HepG2 (cell line): ENCODE measurements at regions of chr4 and their contacts with region 1.

Region 1: DNA sequence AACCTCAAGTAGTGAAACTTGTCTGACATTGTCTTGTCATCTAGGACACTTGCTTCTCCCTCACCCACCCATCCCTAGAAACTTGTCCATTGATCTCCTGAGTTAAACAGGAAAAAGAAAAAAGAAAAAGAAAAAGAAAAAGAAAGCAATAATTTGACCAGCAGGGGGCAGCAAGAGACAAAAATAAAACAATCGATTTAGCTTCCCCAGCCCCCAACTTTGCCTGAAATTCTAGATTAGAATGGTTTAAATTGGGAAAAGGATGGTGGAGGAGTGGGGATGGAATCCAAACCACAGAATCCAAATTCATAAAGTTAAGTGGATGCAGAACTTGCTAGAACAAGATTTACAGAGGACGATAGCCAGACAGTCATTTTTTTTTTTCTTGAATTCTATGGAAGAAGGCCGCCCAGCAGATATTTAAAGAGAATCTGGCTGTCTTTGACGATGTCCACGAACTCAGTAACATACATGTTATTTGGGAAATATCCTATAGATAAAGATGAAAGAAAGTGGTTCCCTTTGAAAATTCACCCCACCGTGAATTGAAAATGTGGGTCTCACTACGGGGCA is 282.9 kb downstream of the USP46 start:
- DNase-seq: peak; percentile 45
- ATAC-seq: no peak; the same call in 2 of the 3 replicates
- H3K4me3 ChIP-seq: no peak overlapping the region
- H3K27ac ChIP-seq: no peak overlapping the region
- H3K4me1 ChIP-seq: peaks cover 16% of the 10 kb centered on the region
- H3K27me3 ChIP-seq: 0 out of 5 replicates have a peak, but pooled peaks cover 0 to 3% of the 10 kb centered on the region in 2 experiments
- CTCF ChIP-seq: peak; percentile 61
- EP300 ChIP-seq: no peak
- POLR2A ChIP-seq: no peak
- RAD21 ChIP-seq: peak; percentile 16; the same call in 1 of the 2 replicates

Region 2: DNA sequence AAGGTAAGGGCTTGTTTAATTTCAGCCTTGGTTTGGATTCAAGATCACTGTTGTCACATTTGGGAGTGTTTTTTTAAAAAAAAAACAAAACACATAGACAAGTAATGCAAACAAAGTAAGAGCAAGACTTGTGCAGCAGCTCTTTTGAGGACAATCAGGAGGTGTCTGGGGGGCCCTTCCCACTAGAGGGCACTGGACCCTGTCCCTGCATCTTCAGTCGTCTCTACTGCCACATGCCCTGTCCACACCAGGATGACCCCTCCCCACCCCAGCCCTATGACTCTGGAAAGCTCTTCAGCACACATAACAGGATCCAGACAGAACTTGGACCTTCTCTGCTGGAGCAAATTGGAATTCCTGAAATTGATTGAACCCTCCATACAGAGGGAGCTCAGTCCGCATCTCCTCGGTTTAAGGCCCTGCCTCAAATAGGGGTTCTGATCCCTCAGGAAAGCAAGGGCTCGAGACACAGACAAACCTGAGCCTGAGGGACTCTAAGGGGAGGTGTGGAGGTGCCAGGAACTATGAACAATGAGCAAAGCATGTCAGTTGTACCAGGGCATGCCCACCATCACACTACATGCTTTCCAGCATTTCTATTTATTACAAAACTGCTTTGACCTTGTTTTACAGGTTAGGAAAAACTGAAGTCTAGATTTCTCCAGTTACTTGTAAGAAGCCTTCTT is 212.0 kb after region 1 on chr4:
- CTCF ChIA-PET with region 1: no interaction called
- POLR2A ChIA-PET with region 1: no interaction called
- in situ Hi-C with region 1: no loop called
- intact Hi-C with region 1: loop called (anchors 1 kb)
- DNase-seq: peak; percentile 33
- ATAC-seq: peak; percentile 96
- H3K4me3 ChIP-seq: no peak overlapping the region
- H3K27ac ChIP-seq: no peak overlapping the region
- H3K4me1 ChIP-seq: peaks cover 10% of the 10 kb centered on the region
- H3K27me3 ChIP-seq: no peaks in the 10 kb centered on the region
- CTCF ChIP-seq: peak; percentile 78
- EP300 ChIP-seq: no peak
- POLR2A ChIP-seq: no peak
- RAD21 ChIP-seq: no peak

Region 3: DNA sequence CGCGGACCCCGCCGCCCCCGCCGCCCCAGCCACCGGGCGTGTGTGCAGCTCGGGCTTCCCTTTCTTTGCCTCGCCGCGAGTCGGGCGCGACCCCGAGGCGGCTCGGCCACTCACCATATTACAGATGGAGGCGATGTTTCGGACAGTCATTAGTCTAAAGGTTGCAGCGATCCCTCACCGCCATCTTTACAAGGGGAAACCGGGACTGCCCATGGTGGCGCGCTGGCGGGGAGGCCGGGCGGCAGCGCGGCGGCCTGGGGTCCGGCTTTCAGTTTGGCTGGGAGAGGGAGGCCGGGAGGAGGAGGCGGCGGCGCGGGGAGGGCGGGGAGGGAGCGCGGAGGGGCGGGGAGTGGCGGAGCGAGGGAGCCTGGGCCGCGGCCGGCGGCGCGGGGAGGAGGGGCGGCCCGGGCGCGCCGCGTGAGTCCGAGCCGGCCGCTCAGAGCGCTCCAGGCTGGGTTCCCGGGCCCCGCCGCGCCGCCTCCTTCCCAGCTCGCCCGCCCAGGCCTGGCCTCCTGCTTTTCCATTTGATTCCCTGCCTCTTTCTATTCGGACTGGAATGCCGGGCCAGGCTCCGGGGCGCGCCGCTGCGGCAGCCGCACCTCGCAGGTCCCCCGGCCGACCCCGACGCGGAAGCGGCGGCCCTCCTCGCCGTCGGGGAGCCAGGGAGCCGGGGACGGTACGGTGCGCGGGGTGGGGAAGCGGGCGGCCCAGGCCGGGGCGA is 282.9 kb after region 1 on chr4 and contains the start of gene USP46:
- CTCF ChIA-PET with region 1: no interaction called
- POLR2A ChIA-PET with region 1: no interaction called
- in situ Hi-C with region 1: loop called (anchors 10 kb)
- intact Hi-C with region 1: loop called (anchors 2 kb)
- DNase-seq: peak; percentile 44
- ATAC-seq: peak; percentile 92
- H3K4me3 ChIP-seq: peak within 1 kb of the TSS; percentile 69 to 87 (median 79)
- H3K27ac ChIP-seq: peak within 1 kb of the TSS; percentile 78
- H3K4me1 ChIP-seq: peaks cover 43% of the 10 kb centered on the region
- H3K27me3 ChIP-seq: no peaks in the 10 kb centered on the region; a peak in 1 of 5 replicates
- CTCF ChIP-seq: 0 out of 2 replicates have a peak, but pooled peaks have one; percentile 9
- EP300 ChIP-seq: no peak
- POLR2A ChIP-seq: peak; percentile 51 to 55
- RAD21 ChIP-seq: no peak
- total RNA-seq, gene USP46: 17.4 and 26.4 TPM in 2 replicates

Region 4: GRCh38 chr4:52665592-52665991 is 289.4 kb after region 1 on chr4:
- CTCF ChIA-PET with region 1: no interaction called
- POLR2A ChIA-PET with region 1: no interaction called
- in situ Hi-C with region 1: loop called (anchors 10 kb)
- intact Hi-C with region 1: loop called (anchors 2 kb)
- DNase-seq: peak; percentile 43
- ATAC-seq: peak; percentile 88
- H3K4me3 ChIP-seq: no peak overlapping the region
- H3K27ac ChIP-seq: no peak overlapping the region
- H3K4me1 ChIP-seq: peaks cover 27% of the 10 kb centered on the region
- H3K27me3 ChIP-seq: no peaks in the 10 kb centered on the region
- CTCF ChIP-seq: peak; percentile 64
- EP300 ChIP-seq: no peak
- POLR2A ChIP-seq: no peak
- RAD21 ChIP-seq: no peak

Region 5: GRCh38 chr4:52813546-52813945 is 437.3 kb after region 1 on chr4:
- CTCF ChIA-PET with region 1: no interaction called
- POLR2A ChIA-PET with region 1: no interaction called
- in situ Hi-C with region 1: no loop called
- intact Hi-C with region 1: no loop called
- DNase-seq: no peak
- ATAC-seq: no peak
- H3K4me3 ChIP-seq: no peak overlapping the region
- H3K27ac ChIP-seq: no peak overlapping the region
- H3K4me1 ChIP-seq: no peaks in the 10 kb centered on the region
- H3K27me3 ChIP-seq: no peaks in the 10 kb centered on the region
- CTCF ChIP-seq: no peak
- EP300 ChIP-seq: no peak
- POLR2A ChIP-seq: no peak
- RAD21 ChIP-seq: no peak